ENCODE measurements at regions of chr11 and their contacts with region 1.

Region 1: GRCh38 chr11:100575870-100576705 is 111.0 kb upstream of the ARHGAP42 start:
- DNase-seq: peak in 2 of 4 donors; percentile 49 to 68
- ATAC-seq: peak; percentile 94
- H3K4me3 ChIP-seq: no peak overlapping the region
- H3K27ac ChIP-seq: no peak overlapping the region
- H3K4me1 ChIP-seq: peaks cover 6% of the 10 kb centered on the region in 2 donors
- H3K27me3 ChIP-seq: no peaks in the 10 kb centered on the region
- CTCF ChIP-seq: peak; percentile 37 to 64

Region 2: GRCh38 chr11:100192181-100192580 is 383.9 kb before region 1 on chr11:
- intact Hi-C with region 1: no loop called
- DNase-seq: peak in 2 of 4 donors; percentile 12 to 16
- ATAC-seq: no peak
- H3K4me3 ChIP-seq: no peak overlapping the region
- H3K27ac ChIP-seq: no peak overlapping the region
- H3K4me1 ChIP-seq: no peaks in the 10 kb centered on the region
- H3K27me3 ChIP-seq: no peaks in the 10 kb centered on the region
- CTCF ChIP-seq: no peak

Region 3: DNA sequence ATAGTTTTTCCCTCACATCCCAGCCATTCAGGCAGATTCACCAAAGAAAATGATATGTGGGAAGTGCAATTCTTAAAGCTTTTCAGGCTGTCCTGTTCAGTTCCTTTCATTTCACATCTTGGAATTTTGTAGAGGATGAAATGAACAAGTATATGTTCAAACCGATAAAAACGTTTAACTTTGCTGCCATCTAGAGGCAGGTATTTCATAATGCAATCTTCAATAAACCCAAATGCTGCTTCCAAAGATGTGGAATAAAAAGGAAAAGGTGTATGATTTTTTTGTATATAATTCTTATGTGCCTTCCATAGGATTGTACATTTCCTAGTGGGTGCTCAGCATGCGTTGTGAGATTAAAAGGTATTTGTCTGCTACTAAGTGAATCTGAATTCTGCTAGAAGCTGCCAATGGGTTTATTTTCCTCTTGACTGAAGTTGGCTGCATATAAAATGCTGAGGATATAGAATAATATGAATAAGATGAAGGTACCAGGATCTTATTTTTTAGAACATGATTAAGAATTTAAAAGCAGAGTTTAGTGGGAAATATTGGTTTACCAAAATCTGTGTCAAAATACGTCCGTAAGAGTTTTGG is 354.2 kb after region 1 on chr11:
- intact Hi-C with region 1: loop called in 1 of 2 experiments (anchors 10 kb)
- DNase-seq: peak in 2 of 4 donors; percentile 49 to 73
- ATAC-seq: peak; percentile 79
- H3K4me3 ChIP-seq: no peak overlapping the region
- H3K27ac ChIP-seq: no peak overlapping the region
- H3K4me1 ChIP-seq: no peaks in the 10 kb centered on the region
- H3K27me3 ChIP-seq: no peaks in the 10 kb centered on the region
- CTCF ChIP-seq: peak; percentile 51 to 55

Measured in left lung (tissue), 14 donors.